ENCODE measurements at regions of chr10 and their contacts with region 1.

Region 1: DNA sequence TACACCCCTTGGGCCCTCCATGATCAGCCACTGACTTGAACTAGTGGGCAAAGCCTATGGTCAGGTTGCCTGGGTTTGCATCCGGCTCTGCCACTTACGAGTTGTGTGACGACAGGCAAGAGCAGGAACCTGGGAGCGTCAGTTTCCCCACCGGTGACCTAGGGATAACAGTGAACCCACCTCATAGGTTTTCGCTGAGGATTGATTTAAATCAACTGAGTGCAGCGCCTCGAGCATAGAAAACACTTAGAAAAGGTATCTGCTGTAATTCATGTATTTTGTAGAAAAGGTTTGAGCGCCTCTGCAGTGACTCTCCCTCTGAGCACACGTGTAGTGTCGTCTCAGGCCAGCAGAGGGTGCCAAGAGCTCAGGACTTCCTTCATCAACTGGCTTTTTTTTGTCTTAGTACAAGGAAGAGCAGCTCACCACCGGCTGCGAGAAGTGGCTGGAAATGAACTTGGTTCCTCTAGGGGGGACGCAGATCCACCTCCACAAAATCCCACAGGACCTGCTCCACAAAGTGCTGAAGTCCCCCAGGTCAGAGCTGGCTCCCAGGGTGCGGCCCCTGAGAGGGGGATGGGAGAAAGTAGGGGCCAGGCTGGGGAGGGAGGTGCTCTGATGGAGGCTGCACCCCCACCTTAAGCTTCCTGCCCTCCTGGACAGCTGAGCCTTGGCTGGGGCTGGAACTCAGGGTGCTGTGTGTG is 27.7 kb downstream of the BTBD16 start:
- DNase-seq: peak; percentile 53
- H3K4me3 ChIP-seq: no peak overlapping the region
- H3K27ac ChIP-seq: no peak overlapping the region
- H3K4me1 ChIP-seq: no peaks in the 10 kb centered on the region
- H3K27me3 ChIP-seq: no peaks in the 10 kb centered on the region
- CTCF ChIP-seq: peak; percentile 83 to 92 (median 88)
- POLR2A ChIP-seq: no peak

Region 2: DNA sequence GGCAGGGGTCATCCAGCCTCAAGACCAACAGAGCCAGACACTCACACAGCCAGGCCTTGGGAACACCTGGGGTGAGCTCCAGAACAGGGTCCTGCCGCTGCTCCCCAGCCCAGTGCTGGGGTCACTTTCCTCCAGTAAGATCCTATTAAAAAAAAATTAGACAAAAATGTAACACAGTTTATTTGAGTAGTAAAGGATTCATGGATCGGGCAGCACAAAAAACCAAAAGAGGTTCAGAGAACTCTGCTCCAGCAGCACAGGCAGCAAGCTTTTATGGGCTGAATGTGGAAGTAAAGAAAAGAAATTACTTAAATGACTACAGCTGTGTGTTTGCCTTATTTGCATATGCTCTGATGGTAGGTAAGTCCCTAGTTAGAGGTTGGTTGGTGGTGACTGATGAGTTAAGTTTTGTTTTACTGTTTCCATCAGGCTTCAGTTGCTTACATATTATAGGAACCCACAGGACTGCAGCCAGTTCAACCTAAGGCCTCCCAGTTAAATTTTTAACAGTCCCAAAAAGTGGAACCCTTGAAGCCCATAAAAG is 620.0 kb before region 1 on chr10:
- intact Hi-C with region 1: no loop called
- DNase-seq: no peak
- H3K4me3 ChIP-seq: no peak overlapping the region
- H3K27ac ChIP-seq: no peak overlapping the region
- H3K4me1 ChIP-seq: no peaks in the 10 kb centered on the region
- H3K27me3 ChIP-seq: no peaks in the 10 kb centered on the region
- CTCF ChIP-seq: no peak
- POLR2A ChIP-seq: no peak

Region 3: GRCh38 chr10:121702351-121703320 is 596.1 kb before region 1 on chr10:
- intact Hi-C with region 1: no loop called
- DNase-seq: no peak
- H3K4me3 ChIP-seq: no peak overlapping the region
- H3K27ac ChIP-seq: no peak overlapping the region
- H3K4me1 ChIP-seq: no peaks in the 10 kb centered on the region
- H3K27me3 ChIP-seq: no peaks in the 10 kb centered on the region
- CTCF ChIP-seq: no peak
- POLR2A ChIP-seq: no peak

Region 4: GRCh38 chr10:122342293-122343134 is 43.8 kb after region 1 on chr10:
- intact Hi-C with region 1: loop called (anchors 5 kb)
- DNase-seq: peak; percentile 28
- H3K4me3 ChIP-seq: no peak overlapping the region
- H3K27ac ChIP-seq: no peak overlapping the region
- H3K4me1 ChIP-seq: no peaks in the 10 kb centered on the region
- H3K27me3 ChIP-seq: no peaks in the 10 kb centered on the region
- CTCF ChIP-seq: peak; percentile 60 to 83 (median 80)
- POLR2A ChIP-seq: no peak

Measured in prostate gland (tissue), 2 donors.